ENCODE measurements at regions of chr5 and their contacts with region 1.

Region 1: GRCh38 chr5:14983666-14984441 is 112.3 kb upstream of the ANKH start:
- DNase-seq: peak in 6 of 10 donors; percentile 9 to 46 (median 24)
- ATAC-seq: peak; percentile 99
- H3K4me3 Mint-ChIP-seq: peak overlapping the region in 9 of 10 donors; percentile 8 to 81 (median 36)
- H3K27ac Mint-ChIP-seq: peak overlapping the region in 3 of 10 donors; percentile 42 to 66 (median 58)
- H3K4me1 Mint-ChIP-seq: peaks cover 13 to 28% (median 25%) of the 10 kb centered on the region in 4 donors
- H3K27me3 Mint-ChIP-seq: no peaks in the 10 kb centered on the region

Region 2: DNA sequence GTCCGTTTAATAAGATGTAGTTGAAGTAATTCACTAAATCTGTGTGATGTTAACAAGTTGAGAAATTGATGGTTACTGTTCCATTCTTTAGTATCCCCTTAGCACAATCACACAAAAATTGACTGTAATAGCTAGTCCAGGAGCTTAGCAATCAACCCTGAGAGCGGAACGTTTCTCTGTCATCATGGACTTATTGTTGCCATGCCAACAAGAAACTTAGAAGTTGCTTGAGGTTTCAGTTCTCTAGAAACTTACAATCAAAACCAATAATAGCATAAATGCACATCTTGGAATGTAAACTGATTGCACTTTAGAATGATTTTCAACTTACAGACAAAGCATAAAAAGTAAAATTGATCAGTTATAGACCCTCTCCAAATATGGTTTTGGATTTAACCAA is 13.1 kb after region 1 on chr5:
- POLR2A ChIA-PET with region 1: interaction called, 10 read pairs
- DNase-seq: no peak
- ATAC-seq: no peak
- H3K4me3 Mint-ChIP-seq: no peak overlapping the region
- H3K27ac Mint-ChIP-seq: no peak overlapping the region
- H3K4me1 Mint-ChIP-seq: peaks cover 2 to 46% (median 12%) of the 10 kb centered on the region in 4 donors
- H3K27me3 Mint-ChIP-seq: no peaks in the 10 kb centered on the region

Region 3: GRCh38 chr5:15037247-15037908 is 53.5 kb after region 1 on chr5:
- POLR2A ChIA-PET with region 1: no interaction called
- DNase-seq: no peak
- ATAC-seq: no peak
- H3K4me3 Mint-ChIP-seq: no peak overlapping the region
- H3K27ac Mint-ChIP-seq: no peak overlapping the region
- H3K4me1 Mint-ChIP-seq: no peaks in the 10 kb centered on the region
- H3K27me3 Mint-ChIP-seq: peaks cover 0 to 14% (median 5%) of the 10 kb centered on the region in 5 donors